Heart left ventricle (tissue), 16 donors: ENCODE measurements at regions of chr3 and their contacts with region 1.

Region 1: GRCh38 chr3:99638167-99638948 is at the start of gene COL8A1:
- DNase-seq: peak; percentile 61 to 80 (median 76)
- ATAC-seq: peak; percentile 71 to 94 (median 88)
- H3K4me3 ChIP-seq: peak within 1 kb of the TSS; percentile 22 to 76 (median 58)
- H3K27ac ChIP-seq: peak within 1 kb of the TSS; percentile 50 to 91 (median 78)
- H3K4me1 ChIP-seq: peaks cover 0 to 26% (median 5%) of the 10 kb centered on the region in 12 donors
- H3K27me3 ChIP-seq: peaks cover 0 to 39% (median 15%) of the 10 kb centered on the region in 9 donors
- CTCF ChIP-seq: no peak
- POLR2A ChIP-seq: peak in 1 of 2 donors; percentile 41
- total RNA-seq, gene COL8A1: 12.5 to 39.2 (median 22.7) TPM

Region 2: GRCh38 chr3:99544786-99545281 is 93.5 kb before region 1 on chr3:
- intact Hi-C with region 1: loop called in 2 of 10 experiments (anchors 5 kb)
- DNase-seq: peak in 4 of 5 donors; percentile 24 to 61 (median 42)
- ATAC-seq: peak; percentile 46 to 73 (median 64)
- H3K4me3 ChIP-seq: no peak overlapping the region
- H3K27ac ChIP-seq: peak overlapping the region; percentile 41 to 80 (median 64)
- H3K4me1 ChIP-seq: peaks cover 0 to 61% (median 32%) of the 10 kb centered on the region in 12 donors
- H3K27me3 ChIP-seq: no peaks in the 10 kb centered on the region
- CTCF ChIP-seq: no peak
- POLR2A ChIP-seq: no peak

Region 3: DNA sequence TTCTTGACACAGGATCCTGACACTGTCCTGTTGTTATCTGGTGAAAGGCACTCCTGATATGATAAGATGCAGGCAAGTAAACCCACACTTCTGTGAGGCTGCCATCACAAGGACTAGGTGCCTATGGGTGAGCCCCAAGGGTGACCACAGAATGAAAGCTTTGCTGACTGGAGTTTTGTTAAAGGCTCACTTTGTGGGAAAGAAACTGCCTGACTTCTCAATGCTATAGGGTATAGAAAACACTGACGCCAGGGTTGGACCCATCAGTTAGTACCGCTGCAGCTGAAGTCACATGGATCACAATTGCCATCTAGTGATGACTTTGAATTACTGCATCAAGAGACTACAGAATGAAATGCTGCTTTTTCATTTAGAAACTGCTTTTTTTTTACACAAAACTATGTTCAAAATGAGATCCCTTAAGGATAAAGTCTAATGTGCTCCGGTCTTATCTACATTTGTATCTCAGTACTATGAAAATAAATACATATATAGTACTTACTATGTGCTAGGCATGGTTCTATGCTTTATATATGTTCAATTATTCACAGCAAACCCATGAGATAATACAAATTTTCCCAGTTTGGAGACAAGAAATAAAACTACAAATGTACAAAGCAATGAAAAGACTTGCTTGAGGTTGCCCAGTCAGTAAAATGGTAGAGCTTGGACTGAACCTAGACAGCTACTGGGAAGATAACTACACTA is 115.1 kb after region 1 on chr3:
- intact Hi-C with region 1: loop called in 5 of 10 experiments (anchors 5 to 10 kb)
- DNase-seq: peak in 2 of 5 donors; percentile 15 to 27
- ATAC-seq: peak; percentile 69 to 86 (median 77)
- H3K4me3 ChIP-seq: no peak overlapping the region
- H3K27ac ChIP-seq: no peak overlapping the region
- H3K4me1 ChIP-seq: peaks cover 0 to 20% (median 1%) of the 10 kb centered on the region in 12 donors
- H3K27me3 ChIP-seq: no peaks in the 10 kb centered on the region
- CTCF ChIP-seq: peak; percentile 57 to 82 (median 71)
- POLR2A ChIP-seq: no peak